HEK293T (cell line): ENCODE measurements at regions of chr10 and their contacts with region 1.

Region 1: GRCh38 chr10:101141616-101142532 is 10.8 kb downstream of the TLX1 start:
- DNase-seq: peak; percentile 96

Region 2: GRCh38 chr10:100847440-100847839 is 294.4 kb before region 1 on chr10:
- CTCF ChIA-PET with region 1: no interaction called
- POLR2A ChIA-PET with region 1: no interaction called
- DNase-seq: no peak

Region 3: DNA sequence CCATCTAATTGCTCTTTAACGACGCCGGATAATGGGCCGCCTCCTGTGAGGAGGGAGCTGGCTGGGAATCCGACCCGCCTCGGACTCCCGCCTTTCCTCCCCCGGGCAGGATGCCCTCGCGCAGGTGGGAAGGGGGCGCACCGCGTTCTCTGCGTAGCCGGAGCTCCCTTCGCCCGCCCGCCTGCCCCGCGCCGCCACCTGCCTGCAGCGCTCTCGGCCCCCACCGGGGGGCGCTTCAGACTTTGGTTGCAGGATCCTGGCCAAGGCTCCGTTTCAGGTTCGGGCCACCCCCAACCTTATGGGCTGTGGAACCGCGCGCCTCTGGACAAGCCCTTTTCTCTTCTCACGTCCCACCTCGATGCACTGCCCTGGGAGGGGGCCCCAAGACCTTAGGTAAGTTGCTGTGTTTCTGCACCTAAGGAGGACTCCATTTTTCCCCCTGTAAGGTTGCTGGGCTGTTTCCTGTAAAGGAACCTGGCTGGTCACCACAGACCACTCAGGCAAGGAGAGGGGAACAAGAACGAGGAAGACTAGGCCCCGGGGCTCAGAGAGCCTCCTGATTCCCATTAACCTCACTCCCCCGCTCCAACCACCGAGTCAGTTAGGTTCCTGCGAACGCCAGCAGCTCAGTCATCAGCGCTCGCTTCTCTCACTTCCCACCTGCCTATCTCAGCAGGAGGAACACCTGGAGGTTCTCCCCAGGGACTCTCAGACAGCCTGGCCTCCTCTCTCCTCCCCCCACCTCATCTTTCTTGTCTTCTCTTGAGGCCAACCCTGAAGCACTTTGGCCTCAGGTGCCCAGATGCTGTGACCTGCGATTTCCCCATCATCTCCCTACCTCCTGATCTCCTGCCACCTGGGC is 91.4 kb before region 1 on chr10:
- CTCF ChIA-PET with region 1: interaction called, 14 read pairs
- POLR2A ChIA-PET with region 1: interaction called, 5 read pairs
- DNase-seq: peak; percentile 90

Region 4: GRCh38 chr10:101060036-101060950 is 81.6 kb before region 1 on chr10:
- CTCF ChIA-PET with region 1: interaction called, 9 read pairs
- POLR2A ChIA-PET with region 1: interaction called, 11 read pairs
- DNase-seq: peak; percentile 88

Region 5: DNA sequence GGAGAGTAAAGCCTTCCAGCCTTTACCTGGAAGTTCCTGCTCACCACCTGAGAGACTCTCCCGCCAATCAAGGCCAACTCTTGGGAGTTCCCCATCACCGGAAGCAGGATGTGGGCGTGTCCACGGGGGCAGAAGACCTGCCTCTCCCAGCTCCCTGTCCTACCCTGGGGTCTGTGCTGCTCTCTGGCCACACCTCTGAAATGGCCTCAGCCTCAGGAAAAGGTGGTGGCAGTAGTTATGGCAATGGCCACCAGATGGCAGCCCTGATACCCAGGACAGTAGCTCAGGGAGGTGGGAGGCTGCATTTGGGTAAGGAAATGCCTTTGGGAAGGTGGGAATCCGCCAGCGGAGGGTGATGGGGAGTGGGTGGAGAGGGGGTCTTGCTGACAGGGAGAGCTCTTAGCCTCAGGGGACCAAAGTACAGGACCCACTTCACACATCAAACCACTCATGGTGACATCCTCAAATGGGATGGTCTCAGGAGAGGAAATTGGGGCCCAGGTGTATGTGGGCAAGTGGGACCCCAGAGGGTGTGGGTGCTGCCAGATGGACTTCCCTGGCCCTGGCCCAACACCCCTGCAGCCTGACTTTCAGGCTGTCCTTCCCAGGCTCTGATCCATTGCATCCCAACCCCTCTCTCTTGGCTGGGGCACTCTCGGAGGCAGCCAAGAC is 46.2 kb before region 1 on chr10:
- CTCF ChIA-PET with region 1: interaction called, 153 read pairs
- POLR2A ChIA-PET with region 1: interaction called, 40 read pairs
- DNase-seq: peak; percentile 94

Region 6: GRCh38 chr10:101152316-101152715 is 10.4 kb after region 1 on chr10:
- CTCF ChIA-PET with region 1: interaction called, 21 read pairs
- POLR2A ChIA-PET with region 1: interaction called, 3 read pairs
- DNase-seq: no peak